ENCODE measurements at regions of chr13 and their contacts with region 1.

Region 1: GRCh38 chr13:23794267-23795161 is 94.7 kb downstream of the MIPEP start:
- DNase-seq: no peak
- ATAC-seq: peak; percentile 75
- H3K4me3 Mint-ChIP-seq: no peak overlapping the region
- H3K27ac Mint-ChIP-seq: no peak overlapping the region
- H3K4me1 Mint-ChIP-seq: peaks cover 26% of the 10 kb centered on the region
- H3K27me3 Mint-ChIP-seq: no peaks in the 10 kb centered on the region

Region 2: DNA sequence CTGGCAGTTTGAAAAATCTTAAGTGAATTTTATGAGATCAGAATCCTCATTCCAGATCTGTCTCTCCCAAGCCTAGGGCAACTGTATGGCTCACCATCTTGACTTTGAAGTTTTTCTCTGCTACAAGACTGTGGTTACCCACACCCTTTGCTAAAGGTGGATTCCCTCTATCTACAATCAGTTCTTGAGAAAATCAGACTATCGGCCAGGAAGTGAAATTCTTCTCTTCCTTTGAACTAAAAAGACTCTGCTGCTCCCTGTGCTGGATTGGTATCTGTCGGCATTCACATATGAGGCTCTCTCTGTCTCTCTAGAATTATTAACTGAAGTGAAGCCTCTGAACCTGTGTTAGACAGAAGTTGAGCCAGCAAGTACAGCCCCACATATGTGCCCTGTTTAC is 51.2 kb before region 1 on chr13:
- CTCF ChIA-PET with region 1: interaction called, 4 read pairs
- POLR2A ChIA-PET with region 1: no interaction called
- intact Hi-C with region 1: loop called in 1 of 2 experiments (anchors 1 kb)
- DNase-seq: peak; percentile 21
- ATAC-seq: peak; percentile 98
- H3K4me3 Mint-ChIP-seq: no peak overlapping the region
- H3K27ac Mint-ChIP-seq: no peak overlapping the region
- H3K4me1 Mint-ChIP-seq: peaks cover 31% of the 10 kb centered on the region
- H3K27me3 Mint-ChIP-seq: no peaks in the 10 kb centered on the region

Region 3: DNA sequence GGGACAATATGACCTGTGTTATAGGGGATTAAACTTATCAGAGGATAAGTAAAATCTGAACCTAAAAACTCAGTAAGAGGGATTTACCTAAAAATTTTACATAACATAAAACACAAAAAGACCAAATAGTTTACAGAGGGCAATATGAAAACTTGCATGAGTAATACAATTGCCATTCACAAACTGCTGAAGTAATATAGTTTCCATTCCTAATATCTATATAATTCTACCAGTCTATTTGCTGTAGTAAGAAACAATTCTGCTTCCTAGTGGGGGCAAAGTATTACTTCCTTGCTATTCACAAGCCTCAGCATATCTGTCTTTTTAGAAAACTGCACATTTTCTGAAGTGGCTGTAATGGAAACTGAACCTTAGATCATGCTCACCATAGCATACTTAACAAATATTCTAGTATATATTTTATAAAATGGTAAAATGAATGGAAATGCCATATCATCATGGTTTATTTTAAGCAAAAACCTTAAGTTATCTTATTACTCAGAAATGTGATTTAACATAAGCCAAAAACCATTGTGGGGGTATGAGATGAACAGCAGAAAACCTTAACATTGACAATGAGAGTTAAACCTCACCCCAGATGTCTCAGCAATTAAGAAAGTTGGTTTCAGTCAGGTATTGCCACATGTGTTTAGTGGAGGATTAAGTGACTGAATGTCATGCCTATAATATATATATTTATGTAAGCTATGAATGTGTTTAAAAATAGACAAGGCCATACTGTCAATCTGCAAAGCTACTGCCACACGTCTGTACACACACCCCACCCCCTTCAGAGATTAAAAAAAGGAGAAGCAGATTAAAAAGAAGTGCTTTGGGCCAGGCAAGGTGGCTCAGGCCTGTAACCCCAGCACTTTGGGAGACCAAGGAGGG is 42.2 kb before region 1 on chr13:
- CTCF ChIA-PET with region 1: interaction called, 3 read pairs
- POLR2A ChIA-PET with region 1: no interaction called
- intact Hi-C with region 1: loop called (anchors 1 kb)
- DNase-seq: no peak
- ATAC-seq: peak; percentile 78
- H3K4me3 Mint-ChIP-seq: no peak overlapping the region
- H3K27ac Mint-ChIP-seq: no peak overlapping the region
- H3K4me1 Mint-ChIP-seq: peaks cover 44% of the 10 kb centered on the region
- H3K27me3 Mint-ChIP-seq: peaks cover 3% of the 10 kb centered on the region

Region 4: DNA sequence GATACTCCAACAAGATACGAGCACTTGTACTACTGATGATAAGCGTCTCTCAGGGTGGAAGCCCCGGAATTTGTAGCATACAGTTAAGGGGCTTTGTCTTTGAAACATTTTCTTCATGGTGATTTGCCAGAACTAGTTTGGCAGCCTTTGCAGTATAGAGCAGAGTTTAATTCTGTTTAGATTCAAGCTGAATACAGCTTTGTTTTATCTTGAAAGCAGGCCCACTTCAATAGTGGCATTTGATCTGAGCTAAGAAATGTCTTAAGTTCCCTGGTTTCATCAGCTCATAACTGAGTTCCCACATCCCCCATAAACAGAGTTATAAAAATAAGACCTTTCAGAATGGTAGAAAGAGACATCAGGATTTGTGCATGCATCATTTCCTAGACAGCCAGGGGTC is 31.2 kb before region 1 on chr13:
- CTCF ChIA-PET with region 1: no interaction called
- POLR2A ChIA-PET with region 1: no interaction called
- intact Hi-C with region 1: no loop called
- DNase-seq: no peak
- ATAC-seq: no peak
- H3K4me3 Mint-ChIP-seq: no peak overlapping the region
- H3K27ac Mint-ChIP-seq: no peak overlapping the region
- H3K4me1 Mint-ChIP-seq: no peaks in the 10 kb centered on the region
- H3K27me3 Mint-ChIP-seq: no peaks in the 10 kb centered on the region

Region 5: DNA sequence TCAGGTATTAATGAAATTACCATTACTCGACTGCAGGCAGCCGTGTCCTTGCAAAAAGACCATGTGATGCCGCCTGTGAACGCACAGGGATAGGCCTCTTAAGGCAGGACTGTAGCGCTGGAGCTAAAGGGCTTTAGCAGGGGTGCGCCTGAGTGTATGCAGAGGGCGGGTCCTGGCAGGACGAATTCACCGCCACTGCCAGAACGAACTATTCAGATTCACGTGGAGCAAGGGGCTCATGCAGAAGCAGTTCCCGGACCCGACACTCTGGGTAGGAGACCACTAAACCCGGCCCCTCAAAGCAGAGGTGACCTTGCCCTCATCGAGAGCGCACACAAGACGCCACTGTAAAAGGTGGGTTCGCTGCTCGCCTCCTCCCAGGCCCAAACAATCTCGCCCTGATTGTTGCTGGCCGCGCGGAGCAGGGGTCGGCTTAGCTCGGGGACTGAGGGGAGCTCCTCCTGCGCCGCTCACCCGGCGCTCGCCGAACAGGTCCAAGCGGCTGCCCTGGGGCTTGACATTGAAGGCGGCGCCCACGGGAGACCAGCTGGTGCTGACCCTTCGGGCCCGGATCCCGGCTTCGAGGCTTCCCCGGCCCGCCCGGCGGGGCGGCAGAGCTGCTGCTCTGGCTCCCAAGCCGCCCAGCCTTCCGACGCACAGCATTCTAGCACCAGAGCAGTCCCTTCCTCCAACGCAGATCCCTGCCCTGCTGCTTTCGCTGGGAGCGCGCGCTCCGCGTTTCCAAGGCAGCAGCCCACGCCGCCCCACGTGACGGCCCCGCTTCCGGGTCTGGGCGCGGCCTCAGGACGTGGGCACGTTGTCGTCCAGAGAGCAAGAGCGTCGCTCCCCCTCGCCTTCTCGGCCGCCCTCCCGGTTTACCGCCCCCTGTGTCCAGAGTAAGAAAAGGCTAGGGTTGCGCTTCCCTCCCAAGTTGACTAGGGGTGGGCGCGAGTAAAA is 94.4 kb after region 1 on chr13 and contains the start of gene MIPEP:
- CTCF ChIA-PET with region 1: no interaction called
- POLR2A ChIA-PET with region 1: no interaction called
- intact Hi-C with region 1: loop called in 1 of 2 experiments (anchors 1 kb)
- DNase-seq: peak; percentile 94
- ATAC-seq: peak; percentile 90
- H3K4me3 Mint-ChIP-seq: peak within 1 kb of the TSS; percentile 79
- H3K27ac Mint-ChIP-seq: peak within 1 kb of the TSS; percentile 75
- H3K4me1 Mint-ChIP-seq: peaks cover 23% of the 10 kb centered on the region
- H3K27me3 Mint-ChIP-seq: no peaks in the 10 kb centered on the region
- total RNA-seq, gene MIPEP: 13.2 to 15.5 TPM

Region 6: DNA sequence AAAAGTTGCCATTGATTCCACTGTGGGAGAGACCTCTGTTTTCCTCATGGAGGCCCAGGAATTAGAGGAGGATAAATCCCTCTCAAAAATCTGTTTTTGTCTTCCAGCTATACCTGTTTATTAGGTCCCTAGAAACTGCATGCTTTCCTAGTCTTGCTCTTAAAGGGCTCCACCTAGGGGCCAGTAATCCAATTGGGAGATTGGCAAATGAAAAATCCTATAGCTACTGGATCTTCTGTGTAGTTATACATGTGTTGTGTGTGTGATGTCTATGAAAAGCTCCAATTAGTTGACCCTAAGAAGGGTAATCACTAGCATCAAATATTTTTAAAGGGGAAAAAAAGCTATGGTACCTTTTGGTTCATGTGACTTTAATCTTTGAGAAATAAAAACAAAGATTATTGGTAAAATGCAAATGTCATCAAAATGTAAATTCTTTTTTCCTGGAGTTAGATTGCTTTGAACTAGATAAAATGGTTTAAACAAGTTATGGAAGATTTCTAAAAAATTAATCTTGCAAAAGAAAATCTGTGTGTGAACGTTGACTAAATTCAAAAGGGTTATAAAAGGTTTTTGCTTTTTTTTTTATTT is 166.1 kb after region 1 on chr13:
- CTCF ChIA-PET with region 1: no interaction called
- POLR2A ChIA-PET with region 1: no interaction called
- intact Hi-C with region 1: loop called in 1 of 2 experiments (anchors 10 kb)
- DNase-seq: peak; percentile 16
- ATAC-seq: peak; percentile 34
- H3K4me3 Mint-ChIP-seq: no peak overlapping the region
- H3K27ac Mint-ChIP-seq: no peak overlapping the region
- H3K4me1 Mint-ChIP-seq: peaks cover 30% of the 10 kb centered on the region
- H3K27me3 Mint-ChIP-seq: no peaks in the 10 kb centered on the region

Region 7: DNA sequence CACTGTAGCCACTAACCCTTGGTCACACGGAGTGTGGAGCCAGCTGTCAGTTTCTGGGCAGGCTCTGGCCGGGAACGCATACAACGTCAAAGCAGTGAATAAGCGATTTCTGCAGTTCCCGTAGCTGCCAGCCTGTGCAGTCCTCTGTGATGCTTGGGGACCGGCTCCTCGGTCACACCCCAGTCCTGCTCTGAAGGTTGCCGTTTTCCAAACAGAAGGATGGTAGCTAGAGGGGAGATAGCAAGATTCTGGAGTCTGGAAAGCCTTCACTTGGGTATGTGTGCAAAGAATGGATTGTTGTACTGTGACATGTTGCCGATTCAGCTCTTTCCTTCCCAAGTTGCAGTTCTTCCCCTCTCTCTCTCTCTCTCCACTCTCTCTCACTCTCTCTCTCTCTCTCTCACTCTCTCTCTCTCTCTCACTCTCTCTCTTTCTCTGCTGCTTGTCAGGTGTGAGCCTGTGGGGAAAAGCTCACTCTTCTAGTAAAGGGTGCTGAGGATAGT is 476.2 kb after region 1 on chr13:
- CTCF ChIA-PET with region 1: no interaction called
- POLR2A ChIA-PET with region 1: no interaction called
- intact Hi-C with region 1: loop called in 1 of 2 experiments (anchors 2 kb)
- DNase-seq: peak; percentile 80
- ATAC-seq: peak; percentile 37
- H3K4me3 Mint-ChIP-seq: peak overlapping the region; percentile 87
- H3K27ac Mint-ChIP-seq: peak overlapping the region; percentile 97
- H3K4me1 Mint-ChIP-seq: peaks cover 85% of the 10 kb centered on the region
- H3K27me3 Mint-ChIP-seq: no peaks in the 10 kb centered on the region